Common myeloid progenitor, CD34-positive (primary cell): ENCODE measurements at regions of chr13 and their contacts with region 1.

Region 1: GRCh38 chr13:51286135-51287002 is 53.1 kb upstream of the SERPINE3 start:
- DNase-seq: peak; percentile 64 to 81 (median 74)
- H3K4me3 ChIP-seq: no peak overlapping the region
- H3K27ac ChIP-seq: no peak overlapping the region
- H3K4me1 ChIP-seq: peaks cover 0 to 1% (median 0%) of the 10 kb centered on the region in 4 experiments
- H3K27me3 ChIP-seq: no peaks in the 10 kb centered on the region

Region 2: DNA sequence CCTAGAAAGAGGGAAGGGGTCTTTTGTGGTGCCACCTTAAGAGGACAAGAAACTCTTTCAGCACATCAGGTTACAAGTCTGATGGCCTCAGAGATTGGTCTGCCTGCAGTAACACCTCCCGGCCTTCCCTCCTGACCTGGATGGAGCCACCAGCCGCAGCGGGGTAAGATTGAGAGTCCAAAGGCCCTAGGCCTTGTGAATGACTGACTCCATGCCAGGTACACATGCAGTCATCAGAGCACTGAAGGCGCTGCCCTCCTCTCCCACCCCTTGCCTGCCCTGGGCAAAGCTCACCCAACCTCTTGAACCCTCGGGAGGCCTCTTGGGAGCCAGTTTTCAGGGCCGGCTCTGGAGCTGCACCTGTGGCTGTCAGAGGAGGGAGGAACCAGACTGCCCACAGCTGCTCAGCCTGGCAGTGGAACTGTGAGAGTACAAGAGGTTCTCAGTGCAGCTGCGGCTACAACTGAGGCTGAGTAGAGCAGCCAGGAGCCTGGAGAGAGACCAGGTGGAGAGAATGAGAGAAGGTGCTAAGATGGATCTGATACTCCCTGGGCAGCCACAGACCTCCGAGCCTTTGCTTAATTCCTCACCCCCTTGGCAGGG is 151.5 kb before region 1 on chr13:
- CTCF ChIA-PET with region 1: interaction called, 114 read pairs
- POLR2A ChIA-PET with region 1: no interaction called
- DNase-seq: no peak
- H3K4me3 ChIP-seq: no peak overlapping the region
- H3K27ac ChIP-seq: no peak overlapping the region
- H3K4me1 ChIP-seq: peaks cover 0 to 1% (median 0%) of the 10 kb centered on the region in 4 experiments
- H3K27me3 ChIP-seq: no peaks in the 10 kb centered on the region

Region 3: GRCh38 chr13:51222037-51222685 is 64.2 kb before region 1 on chr13 and contains the start of gene FAM124A:
- CTCF ChIA-PET with region 1: interaction called, 16 read pairs
- POLR2A ChIA-PET with region 1: no interaction called
- DNase-seq: peak; percentile 32 to 75 (median 68)
- H3K4me3 ChIP-seq: peak within 1 kb of the TSS; percentile 31 to 88 (median 67)
- H3K27ac ChIP-seq: peak within 1 kb of the TSS in 1 of 2 experiments; percentile 22
- H3K4me1 ChIP-seq: peaks cover 0 to 17% (median 13%) of the 10 kb centered on the region in 4 experiments
- H3K27me3 ChIP-seq: peaks cover 7 to 29% (median 21%) of the 10 kb centered on the region in 5 experiments

Region 4: DNA sequence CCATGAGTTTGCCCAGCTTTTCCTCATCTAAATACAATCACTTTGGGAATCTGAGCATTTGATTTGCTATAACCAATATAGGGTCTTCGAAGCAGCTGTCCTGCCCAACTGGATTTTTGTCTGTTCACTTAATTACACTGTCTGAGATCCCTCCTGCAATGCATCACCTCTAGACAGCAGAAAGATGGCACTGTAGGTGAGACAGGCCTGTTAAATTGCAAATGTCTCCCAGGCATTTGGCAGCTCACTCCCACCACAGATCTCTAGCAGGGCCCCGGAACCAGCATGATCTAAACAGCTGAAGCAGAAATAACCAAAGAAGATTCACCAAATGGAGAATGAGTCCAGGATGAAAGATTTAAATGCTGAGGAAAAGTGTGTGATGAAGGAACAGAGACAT is 11.2 kb after region 1 on chr13:
- CTCF ChIA-PET with region 1: interaction called, 35 read pairs
- POLR2A ChIA-PET with region 1: no interaction called
- DNase-seq: peak in 1 of 3 donors; percentile 12
- H3K4me3 ChIP-seq: no peak overlapping the region
- H3K27ac ChIP-seq: no peak overlapping the region
- H3K4me1 ChIP-seq: no peaks in the 10 kb centered on the region
- H3K27me3 ChIP-seq: no peaks in the 10 kb centered on the region

Region 5: DNA sequence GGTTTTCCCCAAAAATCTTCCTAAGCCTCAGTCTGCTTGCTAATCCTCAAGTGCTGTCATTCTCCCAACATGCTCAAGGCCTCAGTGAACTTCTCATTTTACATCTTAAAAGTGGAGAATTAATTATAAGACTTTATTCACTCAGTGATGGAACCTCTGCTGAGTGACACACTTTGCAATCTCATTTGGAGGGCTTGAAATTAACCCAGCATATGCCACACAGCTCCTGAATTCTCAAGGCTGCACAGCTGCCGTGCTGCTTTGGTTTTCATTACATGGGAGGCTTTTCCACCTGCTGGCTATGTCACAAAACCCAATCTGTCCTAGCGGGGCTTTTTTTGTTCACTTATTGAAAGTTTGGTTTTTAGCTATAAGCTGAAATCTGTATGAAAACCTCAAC is 24.9 kb after region 1 on chr13:
- CTCF ChIA-PET with region 1: interaction called, 10 read pairs
- POLR2A ChIA-PET with region 1: no interaction called
- DNase-seq: no peak
- H3K4me3 ChIP-seq: no peak overlapping the region
- H3K27ac ChIP-seq: no peak overlapping the region
- H3K4me1 ChIP-seq: peaks cover 5 to 26% (median 17%) of the 10 kb centered on the region in 4 experiments
- H3K27me3 ChIP-seq: no peaks in the 10 kb centered on the region

Region 6: DNA sequence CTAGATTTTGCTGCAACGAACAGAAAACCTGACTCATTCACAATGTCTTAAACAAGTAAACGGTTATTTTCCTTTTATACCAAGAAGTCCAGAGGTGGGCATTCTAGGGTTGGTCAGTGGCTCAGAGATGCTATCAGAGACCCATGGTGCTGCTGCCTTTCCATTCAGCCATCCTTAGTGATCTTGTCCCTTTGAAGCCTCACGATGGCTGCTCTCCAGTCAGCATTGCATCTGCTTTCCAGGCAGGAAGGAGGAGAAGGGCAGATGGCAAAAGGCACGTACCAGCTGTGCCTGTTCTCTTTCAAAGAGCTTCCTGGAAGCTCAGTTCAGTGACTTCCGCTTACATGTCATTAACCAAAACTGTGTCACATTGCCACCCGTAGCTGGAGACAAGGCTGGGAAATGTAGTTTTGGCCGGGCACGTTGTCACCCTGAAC is 328.0 kb after region 1 on chr13:
- CTCF ChIA-PET with region 1: no interaction called
- POLR2A ChIA-PET with region 1: no interaction called
- DNase-seq: peak in 2 of 3 donors; percentile 62 to 77
- H3K4me3 ChIP-seq: peak overlapping the region in 3 of 7 experiments; percentile 33 to 49 (median 34)
- H3K27ac ChIP-seq: no peak overlapping the region
- H3K4me1 ChIP-seq: peaks cover 12 to 16% (median 14%) of the 10 kb centered on the region in 4 experiments
- H3K27me3 ChIP-seq: no peaks in the 10 kb centered on the region